ENCODE measurements at regions of chr3 and their contacts with region 1.

Region 1: DNA sequence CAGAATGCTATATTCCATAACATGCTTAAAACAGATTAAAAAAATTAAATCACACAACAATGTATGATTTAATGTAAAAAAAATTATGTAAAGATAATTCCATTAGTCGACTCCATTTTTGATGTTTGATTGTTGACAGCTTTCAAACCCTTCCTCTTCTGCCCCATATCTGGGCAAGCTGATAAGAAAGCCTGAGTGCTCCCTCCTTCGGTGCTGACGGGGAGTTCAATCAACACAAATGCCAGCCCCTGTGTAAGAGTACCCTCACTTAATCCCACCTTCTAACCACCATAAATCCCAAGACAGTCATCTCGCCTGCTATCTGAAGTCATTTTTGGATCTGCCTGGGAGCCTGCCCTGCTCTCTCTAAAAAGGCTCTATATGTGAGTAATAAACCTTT is 59.8 kb upstream of the IP6K2 start:
- DNase-seq: no peak
- H3K4me3 ChIP-seq: no peak overlapping the region
- CTCF ChIP-seq: no peak
- POLR2A ChIP-seq: no peak

Region 2: GRCh38 chr3:48747706-48748105 is 29.1 kb before region 1 on chr3:
- intact Hi-C with region 1: loop called (anchors 1 kb)
- DNase-seq: no peak
- H3K4me3 ChIP-seq: no peak overlapping the region
- CTCF ChIP-seq: no peak
- POLR2A ChIP-seq: no peak

Measured in lower leg skin (tissue), 4 donors.